Common myeloid progenitor, CD34-positive (primary cell): ENCODE measurements at regions of chr12 and their contacts with region 1.

Region 1: GRCh38 chr12:24780697-24781368 is 168.1 kb downstream of the BCAT1 start:
- DNase-seq: peak; percentile 16 to 38 (median 23)
- H3K4me3 ChIP-seq: no peak overlapping the region
- H3K27ac ChIP-seq: no peak overlapping the region
- H3K4me1 ChIP-seq: no peaks in the 10 kb centered on the region
- H3K27me3 ChIP-seq: no peaks in the 10 kb centered on the region

Region 2: GRCh38 chr12:24754690-24755638 is 25.9 kb before region 1 on chr12:
- CTCF ChIA-PET with region 1: no interaction called
- POLR2A ChIA-PET with region 1: no interaction called
- DNase-seq: no peak
- H3K4me3 ChIP-seq: no peak overlapping the region
- H3K27ac ChIP-seq: no peak overlapping the region
- H3K4me1 ChIP-seq: no peaks in the 10 kb centered on the region
- H3K27me3 ChIP-seq: no peaks in the 10 kb centered on the region

Region 3: GRCh38 chr12:24795699-24796385 is 15.0 kb after region 1 on chr12:
- CTCF ChIA-PET with region 1: interaction called, 14 read pairs
- POLR2A ChIA-PET with region 1: no interaction called
- DNase-seq: peak in 2 of 3 donors; percentile 66 to 78
- H3K4me3 ChIP-seq: peak overlapping the region in 5 of 7 experiments; percentile 30 to 81 (median 57)
- H3K27ac ChIP-seq: peak overlapping the region; percentile 6 to 11
- H3K4me1 ChIP-seq: peaks cover 0 to 30% (median 19%) of the 10 kb centered on the region in 4 experiments
- H3K27me3 ChIP-seq: no peaks in the 10 kb centered on the region